ENCODE measurements at regions of chr19 and their contacts with region 1.

Region 1: GRCh38 chr19:41563854-41564514 is 12.0 kb upstream of the CEACAM21 start:
- DNase-seq: peak; percentile 85
- ATAC-seq: peak; percentile 76
- H3K4me3 Mint-ChIP-seq: peak overlapping the region; percentile 76
- H3K27ac Mint-ChIP-seq: peak overlapping the region; percentile 61
- H3K4me1 Mint-ChIP-seq: peaks cover 65% of the 10 kb centered on the region
- H3K27me3 Mint-ChIP-seq: no peaks in the 10 kb centered on the region

Region 2: GRCh38 chr19:41439441-41440222 is 124.4 kb before region 1 on chr19 and contains the start of gene DMAC2:
- CTCF ChIA-PET with region 1: interaction called, 23 read pairs
- POLR2A ChIA-PET with region 1: interaction called, 7 read pairs
- intact Hi-C with region 1: no loop called
- DNase-seq: peak; percentile 98
- ATAC-seq: peak; percentile 97
- H3K4me3 Mint-ChIP-seq: no peak within 1 kb of the TSS
- H3K27ac Mint-ChIP-seq: peak within 1 kb of the TSS; percentile 2
- H3K4me1 Mint-ChIP-seq: peaks cover 18% of the 10 kb centered on the region
- H3K27me3 Mint-ChIP-seq: peaks cover 2% of the 10 kb centered on the region
- total RNA-seq, gene DMAC2: 52.5 to 66.3 TPM

Region 3: DNA sequence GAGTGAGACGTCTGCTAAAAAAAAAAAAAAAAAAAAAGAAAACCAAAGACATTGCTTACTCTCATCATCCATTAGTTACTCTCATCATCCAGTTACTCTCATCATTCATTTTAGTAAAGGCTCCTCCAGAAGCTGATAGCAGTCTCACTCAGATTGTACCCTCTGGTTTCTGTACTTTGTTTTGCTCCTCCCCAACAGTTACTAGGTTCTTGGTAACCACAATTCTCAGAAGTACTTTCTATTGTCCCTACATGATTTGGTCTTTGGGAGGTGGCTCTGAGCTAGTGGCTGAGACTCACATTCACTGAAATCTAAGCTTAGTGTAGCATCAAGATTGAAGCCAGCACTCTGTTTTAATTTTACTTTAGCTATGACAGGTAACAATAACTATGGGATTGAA is 106.7 kb before region 1 on chr19:
- CTCF ChIA-PET with region 1: interaction called, 120 read pairs
- POLR2A ChIA-PET with region 1: no interaction called
- intact Hi-C with region 1: no loop called
- DNase-seq: no peak
- ATAC-seq: peak; percentile 88
- H3K4me3 Mint-ChIP-seq: no peak overlapping the region
- H3K27ac Mint-ChIP-seq: no peak overlapping the region
- H3K4me1 Mint-ChIP-seq: peaks cover 8% of the 10 kb centered on the region
- H3K27me3 Mint-ChIP-seq: peaks cover 5% of the 10 kb centered on the region

Region 4: DNA sequence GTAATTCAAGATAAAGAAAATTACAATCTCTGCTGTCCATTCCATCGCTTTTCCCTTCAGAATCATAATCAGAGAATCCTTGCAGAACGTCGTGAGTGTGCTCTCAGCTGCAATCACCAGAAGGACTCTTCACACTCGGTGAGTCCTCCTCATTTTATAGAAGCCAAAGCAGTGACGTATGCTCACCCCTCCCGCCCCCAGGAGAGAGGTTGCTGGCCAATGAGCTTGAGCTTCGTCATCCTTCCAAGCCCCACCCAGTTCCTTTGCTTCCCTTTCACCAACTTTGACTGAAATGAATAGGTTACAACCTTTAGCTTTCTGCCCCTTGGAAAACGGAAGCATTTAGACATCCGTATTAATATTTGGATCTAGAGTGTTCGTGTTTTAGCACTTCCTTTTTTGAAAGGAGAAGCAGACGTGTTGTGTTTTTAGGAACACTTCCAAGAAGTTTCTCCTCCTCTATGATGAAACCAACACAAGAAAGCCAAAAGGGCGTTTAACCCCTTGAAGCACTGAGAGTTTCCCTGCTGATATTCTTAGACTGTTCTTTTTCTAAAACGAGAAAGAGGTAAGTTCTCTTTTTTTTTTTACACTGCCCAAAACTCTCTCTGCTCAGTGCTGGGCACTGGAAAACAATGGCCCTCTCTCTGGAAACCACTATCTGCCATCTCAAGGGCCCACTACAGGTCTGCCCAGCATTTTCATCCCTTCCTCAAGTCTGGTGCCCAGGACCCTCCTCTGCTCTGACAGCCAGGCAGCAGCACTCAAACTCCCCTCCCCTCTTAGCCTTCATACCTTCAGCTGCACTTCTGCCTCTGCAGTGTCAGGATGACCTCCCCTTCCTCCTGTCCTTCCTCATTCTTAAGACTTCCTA is 32.3 kb before region 1 on chr19:
- CTCF ChIA-PET with region 1: interaction called, 450 read pairs
- POLR2A ChIA-PET with region 1: interaction called, 4 read pairs
- intact Hi-C with region 1: no loop called
- DNase-seq: peak; percentile 91
- ATAC-seq: peak; percentile 85
- H3K4me3 Mint-ChIP-seq: peak overlapping the region; percentile 76
- H3K27ac Mint-ChIP-seq: peak overlapping the region; percentile 65
- H3K4me1 Mint-ChIP-seq: peaks cover 60% of the 10 kb centered on the region
- H3K27me3 Mint-ChIP-seq: no peaks in the 10 kb centered on the region

Region 5: DNA sequence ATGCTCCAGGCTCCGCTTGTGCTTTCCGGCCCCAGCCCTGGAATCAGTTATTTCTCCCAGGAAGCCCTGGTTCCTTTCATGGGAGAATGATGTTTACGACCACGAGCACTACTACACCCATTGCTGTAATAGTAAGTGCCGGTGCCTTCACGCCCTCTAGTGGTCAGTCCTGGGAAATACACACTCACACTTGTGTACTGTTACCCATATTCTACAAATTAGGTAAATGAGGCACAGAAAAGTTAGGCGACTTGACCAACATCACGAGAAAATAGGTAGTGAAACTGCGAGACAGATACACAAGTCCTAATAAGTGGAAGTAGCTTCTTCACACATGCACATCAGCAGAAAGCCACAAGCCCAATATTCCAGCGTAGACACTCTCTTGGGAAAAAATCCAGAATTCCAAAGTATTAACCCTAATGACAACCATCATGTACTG is 33.6 kb after region 1 on chr19:
- CTCF ChIA-PET with region 1: interaction called, 62 read pairs
- POLR2A ChIA-PET with region 1: no interaction called
- intact Hi-C with region 1: no loop called
- DNase-seq: peak; percentile 83
- ATAC-seq: peak; percentile 83
- H3K4me3 Mint-ChIP-seq: peak overlapping the region; percentile 4
- H3K27ac Mint-ChIP-seq: no peak overlapping the region
- H3K4me1 Mint-ChIP-seq: peaks cover 12% of the 10 kb centered on the region
- H3K27me3 Mint-ChIP-seq: peaks cover 5% of the 10 kb centered on the region

Region 6: GRCh38 chr19:41691268-41691970 is 127.4 kb after region 1 on chr19:
- CTCF ChIA-PET with region 1: no interaction called
- POLR2A ChIA-PET with region 1: no interaction called
- intact Hi-C with region 1: no loop called
- DNase-seq: peak; percentile 52
- ATAC-seq: peak; percentile 58
- H3K4me3 Mint-ChIP-seq: no peak overlapping the region
- H3K27ac Mint-ChIP-seq: no peak overlapping the region
- H3K4me1 Mint-ChIP-seq: no peaks in the 10 kb centered on the region
- H3K27me3 Mint-ChIP-seq: peaks cover 19% of the 10 kb centered on the region

Measured in activated CD4-positive, alpha-beta T cell treated with anti-CD3 and anti-CD28 coated beads for 36 hours (primary cell).